A549 (cell line): ENCODE measurements at regions of chr7 and their contacts with region 1.

Region 1: GRCh38 chr7:56033671-56034432 is 17.4 kb downstream of the PSPH start:
- DNase-seq: peak; percentile 75 to 83
- ATAC-seq: peak; percentile 97 to 99
- H3K4me3 ChIP-seq: peak overlapping the region; percentile 57
- H3K27ac ChIP-seq: peak overlapping the region; percentile 78 to 90
- H3K4me1 ChIP-seq: peaks cover 27% of the 10 kb centered on the region; the same call in 2 of the 3 replicates
- CTCF ChIP-seq: 0 out of 3 replicates have a peak, but pooled peaks have one; percentile 6
- EP300 ChIP-seq: no peak
- POLR2A ChIP-seq: peak; percentile 64
- RAD21 ChIP-seq: 0 out of 5 replicates have a peak, but pooled peaks of 1 of the 2 experiments have one; percentile 4

Region 2: DNA sequence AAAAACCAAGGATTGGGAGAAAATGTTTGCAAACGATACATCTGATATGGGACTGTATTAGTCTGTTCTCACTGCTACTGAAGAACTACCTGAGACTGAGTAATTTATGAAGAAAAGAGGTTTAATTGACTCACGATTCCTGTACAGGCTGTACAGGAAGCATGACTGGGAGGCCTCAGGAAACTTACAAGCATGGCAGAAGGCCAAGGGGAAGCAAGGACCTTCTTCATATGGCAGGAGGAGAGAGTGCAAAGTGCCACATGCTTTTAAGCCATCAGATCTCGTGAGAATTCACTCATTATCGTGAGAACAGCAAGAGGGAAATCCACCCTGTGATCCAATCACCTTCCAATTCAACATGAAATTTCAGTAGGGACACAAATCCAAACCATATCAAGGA is 135.6 kb before region 1 on chr7:
- CTCF ChIA-PET with region 1: no interaction called
- POLR2A ChIA-PET with region 1: no interaction called
- DNase-seq: no peak
- ATAC-seq: no peak
- H3K4me3 ChIP-seq: no peak overlapping the region
- H3K27ac ChIP-seq: no peak overlapping the region
- H3K4me1 ChIP-seq: no peaks in the 10 kb centered on the region
- CTCF ChIP-seq: no peak
- EP300 ChIP-seq: no peak
- POLR2A ChIP-seq: no peak
- RAD21 ChIP-seq: no peak

Region 3: DNA sequence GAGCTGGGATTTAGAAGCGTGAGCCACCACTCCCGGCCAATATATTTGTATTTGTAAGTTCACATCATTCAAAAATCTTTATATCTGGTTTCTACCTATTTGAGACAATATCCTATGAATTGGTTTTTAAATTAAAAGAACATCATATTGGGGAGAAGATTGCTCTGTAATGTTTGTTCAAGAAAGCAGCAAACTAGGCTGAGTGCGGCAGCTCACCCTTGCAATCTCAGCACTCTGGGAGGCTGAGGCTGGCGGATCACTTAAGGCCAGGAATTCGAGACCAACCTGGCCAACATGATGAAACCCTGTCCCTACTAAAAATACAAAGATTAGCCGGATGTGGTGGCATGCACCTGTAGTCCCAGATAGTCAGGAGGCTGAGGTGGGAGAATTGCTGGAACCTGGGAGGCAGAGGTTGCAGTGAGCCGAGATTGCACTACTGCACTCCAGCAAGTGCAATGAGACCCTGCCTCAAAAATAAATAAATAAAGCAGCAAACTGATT is 60.1 kb before region 1 on chr7:
- CTCF ChIA-PET with region 1: no interaction called
- POLR2A ChIA-PET with region 1: no interaction called
- DNase-seq: no peak
- ATAC-seq: no peak
- H3K4me3 ChIP-seq: no peak overlapping the region
- H3K27ac ChIP-seq: no peak overlapping the region
- H3K4me1 ChIP-seq: peaks cover 7% of the 10 kb centered on the region; the same call in 2 of the 3 replicates
- CTCF ChIP-seq: no peak
- EP300 ChIP-seq: no peak
- POLR2A ChIP-seq: no peak
- RAD21 ChIP-seq: no peak

Region 4: GRCh38 chr7:56063882-56064625 is 30.2 kb after region 1 on chr7 and contains the start of gene SUMF2:
- CTCF ChIA-PET with region 1: interaction called, 4 read pairs
- POLR2A ChIA-PET with region 1: interaction called, 11 read pairs
- DNase-seq: peak; percentile 92 to 98
- ATAC-seq: peak; percentile 95 to 96
- H3K4me3 ChIP-seq: peak within 1 kb of the TSS; percentile 81
- H3K27ac ChIP-seq: peak within 1 kb of the TSS; percentile 91 to 94
- H3K4me1 ChIP-seq: peaks cover 54% of the 10 kb centered on the region
- CTCF ChIP-seq: no peak
- EP300 ChIP-seq: 0 out of 5 replicates have a peak, but pooled peaks of 1 of the 2 experiments have one; percentile 21
- POLR2A ChIP-seq: peak; percentile 96
- RAD21 ChIP-seq: no peak
- polyA plus RNA-seq, gene SUMF2: 85.2 TPM in 2 replicates